Calu3 (cell line): ENCODE measurements at regions of chr2 and their contacts with region 1.

Region 1: GRCh38 chr2:118371515-118371914 is 283.2 kb downstream of the INSIG2 start:
- DNase-seq: peak; percentile 57
- H3K4me3 Mint-ChIP-seq: no peak overlapping the region
- H3K27ac Mint-ChIP-seq: no peak overlapping the region
- H3K4me1 Mint-ChIP-seq: peaks cover 53% of the 10 kb centered on the region
- H3K27me3 Mint-ChIP-seq: no peaks in the 10 kb centered on the region
- CTCF ChIP-seq: peak; percentile 64

Region 2: DNA sequence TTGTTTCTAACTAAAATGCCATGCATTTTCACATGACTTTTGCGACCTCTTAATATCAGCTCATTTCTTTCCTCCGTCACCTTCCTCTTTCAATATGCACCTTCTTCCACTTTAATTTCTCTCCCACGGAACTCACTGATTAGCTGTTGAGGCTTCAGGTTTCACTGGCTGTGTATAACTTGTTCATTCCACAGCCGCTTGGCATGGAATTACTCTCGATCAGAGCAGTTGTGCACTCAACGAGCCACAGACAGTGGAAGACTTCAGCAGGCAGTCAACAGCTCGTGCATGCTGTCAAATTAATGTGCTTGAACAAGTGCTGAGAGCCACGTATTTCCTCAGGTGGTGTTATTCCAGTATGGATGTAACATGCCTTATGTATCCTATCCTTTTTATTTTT is 1048.2 kb before region 1 on chr2:
- CTCF ChIA-PET with region 1: no interaction called
- intact Hi-C with region 1: no loop called
- DNase-seq: no peak
- H3K4me3 Mint-ChIP-seq: no peak overlapping the region
- H3K27ac Mint-ChIP-seq: no peak overlapping the region
- H3K4me1 Mint-ChIP-seq: no peaks in the 10 kb centered on the region
- H3K27me3 Mint-ChIP-seq: no peaks in the 10 kb centered on the region
- CTCF ChIP-seq: no peak

Region 3: GRCh38 chr2:118032169-118033013 is 339.1 kb before region 1 on chr2:
- CTCF ChIA-PET with region 1: no interaction called
- intact Hi-C with region 1: loop called (anchors 5 kb)
- DNase-seq: peak; percentile 53
- H3K4me3 Mint-ChIP-seq: no peak overlapping the region
- H3K27ac Mint-ChIP-seq: no peak overlapping the region
- H3K4me1 Mint-ChIP-seq: peaks cover 8% of the 10 kb centered on the region
- H3K27me3 Mint-ChIP-seq: no peaks in the 10 kb centered on the region
- CTCF ChIP-seq: peak; percentile 76

Region 4: DNA sequence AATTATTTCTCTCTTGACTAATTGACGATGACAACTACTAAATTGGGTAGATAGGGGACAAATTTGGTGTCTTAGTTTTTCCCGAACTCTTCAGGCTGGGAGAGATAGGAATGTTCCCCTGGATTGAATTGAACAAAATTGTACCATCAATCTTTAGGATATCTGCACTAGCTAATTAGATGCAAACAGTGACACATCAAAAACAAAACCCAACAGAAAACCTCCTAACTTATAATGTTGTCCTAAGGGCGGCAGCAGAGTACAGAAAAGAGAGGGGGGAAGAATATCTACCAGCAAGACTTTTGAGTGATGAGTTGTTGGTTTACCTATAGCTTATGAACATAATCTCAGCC is 59.6 kb after region 1 on chr2:
- CTCF ChIA-PET with region 1: interaction called, 8 read pairs
- intact Hi-C with region 1: loop called (anchors 2 kb)
- DNase-seq: peak; percentile 38
- H3K4me3 Mint-ChIP-seq: peak overlapping the region; percentile 3
- H3K27ac Mint-ChIP-seq: peak overlapping the region; percentile 74
- H3K4me1 Mint-ChIP-seq: peaks cover 51% of the 10 kb centered on the region
- H3K27me3 Mint-ChIP-seq: no peaks in the 10 kb centered on the region
- CTCF ChIP-seq: no peak

Region 5: GRCh38 chr2:118539290-118539689 is 167.8 kb after region 1 on chr2:
- CTCF ChIA-PET with region 1: no interaction called
- intact Hi-C with region 1: loop called (anchors 10 kb)
- DNase-seq: peak; percentile 26
- H3K4me3 Mint-ChIP-seq: no peak overlapping the region
- H3K27ac Mint-ChIP-seq: no peak overlapping the region
- H3K4me1 Mint-ChIP-seq: no peaks in the 10 kb centered on the region
- H3K27me3 Mint-ChIP-seq: no peaks in the 10 kb centered on the region
- CTCF ChIP-seq: no peak

Region 6: GRCh38 chr2:118738524-118739308 is 367.2 kb after region 1 on chr2:
- CTCF ChIA-PET with region 1: no interaction called
- intact Hi-C with region 1: loop called (anchors 10 kb)
- DNase-seq: peak; percentile 67
- H3K4me3 Mint-ChIP-seq: no peak overlapping the region
- H3K27ac Mint-ChIP-seq: peak overlapping the region; percentile 21
- H3K4me1 Mint-ChIP-seq: peaks cover 22% of the 10 kb centered on the region
- H3K27me3 Mint-ChIP-seq: no peaks in the 10 kb centered on the region
- CTCF ChIP-seq: no peak

Region 7: DNA sequence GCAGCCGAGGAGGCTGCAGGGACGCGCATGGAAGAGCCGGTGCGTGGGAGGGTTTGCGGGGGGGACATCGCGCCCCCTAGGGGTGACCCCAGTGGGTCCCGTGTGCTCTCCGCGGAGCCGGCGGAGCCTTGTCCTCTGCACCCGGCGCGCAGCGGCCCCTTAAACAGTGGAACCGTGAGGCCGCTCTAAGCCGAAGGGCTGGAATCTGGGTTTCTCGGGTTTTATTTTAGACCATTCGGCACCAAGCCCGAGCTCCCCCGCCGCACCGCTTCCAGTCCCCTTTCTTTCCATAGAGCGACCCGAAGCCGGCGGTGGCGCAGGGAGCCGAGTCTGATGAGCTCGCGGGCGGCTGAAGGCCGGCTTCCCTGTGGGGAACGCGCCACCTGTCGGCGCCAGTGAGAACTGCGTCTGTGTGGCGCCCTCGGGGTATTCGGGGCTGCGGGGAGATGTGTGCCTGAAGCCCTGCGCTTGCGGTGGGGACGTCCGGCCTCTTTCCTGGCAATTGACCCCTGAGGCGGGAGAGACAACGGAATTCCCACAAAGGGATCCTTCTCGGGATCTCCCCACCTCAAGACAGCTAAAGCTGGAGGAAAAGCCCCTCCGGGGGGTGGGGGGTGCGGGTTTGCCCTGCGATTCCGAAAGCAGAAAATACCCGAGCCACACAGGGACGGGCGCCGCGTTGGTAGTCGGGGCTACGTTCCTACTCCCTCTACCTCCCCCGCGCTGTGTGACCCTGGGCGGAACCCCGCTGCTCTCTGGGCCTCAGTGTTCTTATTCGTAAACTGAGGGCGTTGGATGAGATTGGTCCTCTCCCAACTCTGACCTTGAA is 484.1 kb after region 1 on chr2:
- CTCF ChIA-PET with region 1: interaction called, 16 read pairs
- intact Hi-C with region 1: loop called (anchors 1 kb)
- DNase-seq: peak; percentile 93
- H3K4me3 Mint-ChIP-seq: peak overlapping the region; percentile 72
- H3K27ac Mint-ChIP-seq: no peak overlapping the region
- H3K4me1 Mint-ChIP-seq: no peaks in the 10 kb centered on the region
- H3K27me3 Mint-ChIP-seq: peaks cover 12% of the 10 kb centered on the region
- CTCF ChIP-seq: peak; percentile 91